ENCODE measurements at regions of chr12 and their contacts with region 1.

Region 1: DNA sequence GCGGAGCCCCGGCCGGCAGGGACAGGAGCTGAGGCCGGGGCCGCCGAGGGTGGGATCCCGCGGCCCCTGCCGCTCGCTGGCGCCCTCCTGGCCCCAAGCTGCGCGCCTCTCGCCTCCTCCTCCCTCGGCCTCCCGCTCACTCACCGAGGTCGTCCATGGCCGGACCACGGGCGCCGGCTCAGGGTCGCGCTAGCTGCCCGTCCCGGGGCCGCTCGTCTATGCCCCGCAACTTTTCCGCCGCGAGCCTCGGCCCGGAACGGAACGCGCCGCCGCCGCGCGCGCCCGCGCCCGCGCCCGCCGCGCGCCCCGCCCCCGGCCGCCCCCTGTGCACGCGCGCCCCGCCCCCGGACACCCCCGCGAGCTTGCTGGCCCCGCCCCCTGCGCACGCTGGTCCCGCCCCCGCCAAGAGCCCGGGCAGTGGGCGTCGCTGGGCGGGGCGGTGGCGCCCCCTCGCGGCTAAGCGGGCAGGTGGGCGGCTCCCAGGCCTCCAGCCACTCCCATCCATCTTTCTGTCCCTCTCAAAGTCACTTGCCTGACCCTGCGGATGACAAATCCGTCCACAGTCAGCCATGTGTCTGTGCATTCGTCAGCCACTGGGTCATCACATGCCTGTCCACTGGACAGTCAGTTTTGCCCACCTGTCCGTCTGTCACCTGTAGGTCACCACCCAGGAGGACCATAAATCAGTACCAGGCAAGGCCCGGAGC is at the start of gene PXN:
- DNase-seq: peak; percentile 73
- ATAC-seq: peak; percentile 80
- H3K4me3 ChIP-seq: peak within 1 kb of the TSS; percentile 76 to 97 (median 88)
- H3K27ac ChIP-seq: peak within 1 kb of the TSS; percentile 53
- H3K4me1 ChIP-seq: peaks cover 71% of the 10 kb centered on the region
- H3K27me3 ChIP-seq: no peaks in the 10 kb centered on the region
- CTCF ChIP-seq: peak; percentile 85
- EP300 ChIP-seq: peak in 1 of 2 experiments; percentile 41; a peak in 1 of 4 replicates
- POLR2A ChIP-seq: peak; percentile 41 to 66; a peak in 3 of 4 replicates
- RAD21 ChIP-seq: peak; percentile 91
- total RNA-seq, gene PXN: 13.6 and 14.2 TPM in 2 replicates

Region 2: DNA sequence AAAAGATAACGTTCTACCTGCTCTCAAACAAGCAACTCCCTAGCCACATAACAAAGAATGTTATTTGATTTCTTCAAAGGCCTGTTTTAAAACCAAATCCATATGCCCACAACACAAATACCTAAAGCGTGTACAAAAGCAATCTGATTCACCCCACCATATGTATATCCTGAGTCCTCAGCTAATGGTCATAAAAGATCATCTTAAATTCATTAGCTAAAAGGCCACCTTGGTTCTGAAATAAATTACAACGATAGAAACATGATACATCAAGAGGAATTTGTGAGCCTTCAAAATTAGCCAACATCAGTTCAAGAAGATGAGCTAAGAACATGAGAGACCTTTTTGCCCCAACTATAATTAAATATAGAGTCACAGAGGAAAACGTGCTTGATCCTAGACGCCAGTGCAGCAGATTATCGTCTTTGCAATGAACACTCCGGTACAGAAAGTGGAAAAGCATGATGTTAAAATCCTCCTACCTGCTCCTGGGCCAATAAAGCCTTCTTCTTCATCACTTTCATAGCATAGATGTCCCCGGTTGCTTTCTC is 408.5 kb before region 1 on chr12:
- CTCF ChIA-PET with region 1: no interaction called
- POLR2A ChIA-PET with region 1: no interaction called
- in situ Hi-C with region 1: no loop called
- intact Hi-C with region 1: no loop called
- DNase-seq: no peak
- ATAC-seq: no peak
- H3K4me3 ChIP-seq: no peak overlapping the region
- H3K27ac ChIP-seq: no peak overlapping the region
- H3K4me1 ChIP-seq: no peaks in the 10 kb centered on the region
- H3K27me3 ChIP-seq: no peaks in the 10 kb centered on the region
- CTCF ChIP-seq: no peak
- EP300 ChIP-seq: no peak
- POLR2A ChIP-seq: no peak
- RAD21 ChIP-seq: no peak

Region 3: DNA sequence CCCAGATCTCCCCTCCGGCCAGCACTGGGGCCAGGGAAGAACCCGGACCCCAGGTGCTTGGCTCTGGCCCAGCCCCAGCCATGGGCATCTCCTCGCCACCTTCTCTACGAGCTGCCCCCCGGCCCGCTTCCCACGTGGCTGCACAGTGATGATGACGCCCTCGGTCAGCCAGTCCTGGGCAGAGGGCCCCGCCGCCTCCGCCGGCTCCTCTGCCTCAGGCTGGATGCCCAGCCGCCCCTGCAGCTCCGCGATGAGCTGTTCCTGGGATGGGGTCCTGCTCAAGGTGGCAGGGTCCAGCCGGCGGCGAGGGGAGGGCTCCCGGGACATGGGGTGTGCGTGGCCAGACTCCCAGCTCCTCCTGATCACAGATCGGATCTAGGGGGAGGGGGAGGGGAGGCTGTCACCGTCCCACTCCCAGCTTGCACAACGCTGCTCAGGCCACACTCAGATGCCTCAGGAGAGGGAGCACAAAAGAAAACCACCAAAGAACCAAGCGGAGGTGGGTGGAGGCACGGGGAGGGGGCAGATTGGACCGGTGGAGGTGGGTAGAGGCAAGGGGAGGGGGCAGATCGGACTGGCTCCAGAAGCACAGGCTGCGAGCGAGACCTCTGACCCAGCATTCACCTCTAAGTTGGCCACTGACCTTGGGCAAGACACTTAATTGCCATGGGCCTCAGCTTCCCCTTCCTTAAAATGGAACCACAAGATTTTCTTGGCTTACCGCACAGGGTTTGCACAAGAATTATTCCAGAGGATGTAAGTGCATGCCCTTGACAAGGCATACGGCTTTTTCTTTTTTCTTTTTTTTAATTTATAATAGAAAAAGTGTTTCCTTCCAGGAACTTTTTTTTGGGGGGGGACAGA is 48.7 kb before region 1 on chr12:
- CTCF ChIA-PET with region 1: no interaction called
- POLR2A ChIA-PET with region 1: interaction called, 3 read pairs
- in situ Hi-C with region 1: loop called (anchors 10 kb)
- intact Hi-C with region 1: no loop called
- DNase-seq: no peak
- ATAC-seq: no peak
- H3K4me3 ChIP-seq: no peak overlapping the region
- H3K27ac ChIP-seq: no peak overlapping the region
- H3K4me1 ChIP-seq: peaks cover 40% of the 10 kb centered on the region
- H3K27me3 ChIP-seq: no peaks in the 10 kb centered on the region; a peak in 1 of 5 replicates
- CTCF ChIP-seq: no peak
- EP300 ChIP-seq: no peak
- POLR2A ChIP-seq: 0 out of 4 replicates have a peak, but pooled peaks of 1 of the 2 experiments have one; percentile 23
- RAD21 ChIP-seq: no peak

Region 4: DNA sequence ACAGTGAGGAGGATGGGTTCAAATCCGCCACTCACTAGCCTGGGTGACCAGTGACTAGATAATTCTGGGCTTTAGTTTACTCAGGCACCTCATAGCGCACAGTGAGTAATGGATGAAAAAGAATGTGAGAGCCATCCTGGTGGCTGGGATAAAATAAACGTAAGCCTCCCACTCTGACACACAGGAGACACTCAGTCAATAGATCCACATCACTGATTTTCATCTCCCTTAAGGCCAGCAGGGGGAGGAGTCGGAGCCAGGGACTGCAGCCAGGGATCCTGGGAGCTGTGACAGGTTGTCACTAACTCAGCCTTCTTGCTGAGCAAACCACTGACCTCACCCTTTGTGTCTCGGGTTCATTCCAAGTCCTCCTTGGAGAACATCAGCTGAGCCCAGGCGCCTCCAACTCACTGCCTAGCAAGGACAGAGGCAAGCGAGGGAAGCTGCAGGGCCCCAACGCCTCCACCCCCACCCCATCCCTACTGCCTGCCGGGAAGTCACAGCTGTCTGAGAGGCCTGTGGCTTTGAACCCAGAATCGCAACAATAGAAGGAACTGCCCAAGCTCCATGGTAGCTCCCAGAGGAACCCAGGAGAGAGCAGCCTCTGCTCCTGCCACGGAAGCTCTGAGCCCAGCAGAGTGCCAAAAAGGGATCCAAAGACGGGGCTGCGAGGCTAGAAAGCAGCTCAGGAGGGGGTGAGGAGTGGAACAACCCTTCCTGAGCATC is 30.8 kb before region 1 on chr12:
- CTCF ChIA-PET with region 1: interaction called, 51 read pairs
- POLR2A ChIA-PET with region 1: interaction called, 265 read pairs
- in situ Hi-C with region 1: loop called (anchors 5 kb)
- intact Hi-C with region 1: no loop called
- DNase-seq: peak; percentile 85
- ATAC-seq: peak; percentile 81
- H3K4me3 ChIP-seq: no peak overlapping the region; a peak in 1 of 6 replicates
- H3K27ac ChIP-seq: no peak overlapping the region
- H3K4me1 ChIP-seq: peaks cover 66% of the 10 kb centered on the region
- H3K27me3 ChIP-seq: no peaks in the 10 kb centered on the region
- CTCF ChIP-seq: peak; percentile 78
- EP300 ChIP-seq: no peak
- POLR2A ChIP-seq: no peak
- RAD21 ChIP-seq: peak; percentile 50; the same call in 1 of the 2 replicates

Measured in HepG2 (cell line).